Activated naive CD4-positive, alpha-beta T cell treated with anti-CD3 and anti-CD28 coated beads for 36 hours (primary cell): ENCODE measurements at regions of chr3 and their contacts with region 1.

Region 1: GRCh38 chr3:36918050-36918449 is 26.8 kb downstream of the TRANK1 start:
- DNase-seq: no peak
- H3K4me3 Mint-ChIP-seq: peak overlapping the region; percentile 3
- H3K27ac Mint-ChIP-seq: peak overlapping the region; percentile 54
- H3K4me1 Mint-ChIP-seq: peaks cover 26% of the 10 kb centered on the region
- H3K27me3 Mint-ChIP-seq: no peaks in the 10 kb centered on the region

Region 2: DNA sequence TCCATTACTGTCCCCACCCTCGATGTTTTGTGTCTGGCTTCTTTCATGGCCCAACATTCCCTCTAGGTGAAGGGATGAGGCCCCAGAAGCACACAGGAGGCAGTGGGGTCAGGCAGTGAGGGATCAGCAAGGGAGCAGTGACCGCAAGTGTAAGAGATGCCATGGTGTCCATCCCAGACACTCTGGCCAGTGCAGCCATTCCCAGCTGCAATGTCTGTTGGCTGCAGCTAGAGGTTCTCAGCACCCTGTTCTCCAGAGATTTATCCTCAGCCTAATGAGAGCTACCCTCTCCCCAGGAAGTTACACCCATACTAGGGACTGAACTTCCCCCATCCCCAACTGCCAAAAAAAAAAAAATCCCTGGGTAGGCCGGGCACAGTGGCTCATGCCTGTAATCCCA is 13.4 kb before region 1 on chr3:
- CTCF ChIA-PET with region 1: interaction called, 13 read pairs
- intact Hi-C with region 1: loop called (anchors 1 kb)
- DNase-seq: no peak
- H3K4me3 Mint-ChIP-seq: no peak overlapping the region
- H3K27ac Mint-ChIP-seq: no peak overlapping the region
- H3K4me1 Mint-ChIP-seq: peaks cover 74% of the 10 kb centered on the region
- H3K27me3 Mint-ChIP-seq: no peaks in the 10 kb centered on the region